BJ (cell line): ENCODE measurements at regions of chr7 and their contacts with region 1.

Region 1: GRCh38 chr7:78020136-78020873 is 221.7 kb downstream of the PHTF2 start:
- DNase-seq: peak; percentile 41
- H3K4me3 ChIP-seq: peak overlapping the region; percentile 54
- H3K27me3 ChIP-seq: no peaks in the 10 kb centered on the region
- CTCF ChIP-seq: peak; percentile 59

Region 2: DNA sequence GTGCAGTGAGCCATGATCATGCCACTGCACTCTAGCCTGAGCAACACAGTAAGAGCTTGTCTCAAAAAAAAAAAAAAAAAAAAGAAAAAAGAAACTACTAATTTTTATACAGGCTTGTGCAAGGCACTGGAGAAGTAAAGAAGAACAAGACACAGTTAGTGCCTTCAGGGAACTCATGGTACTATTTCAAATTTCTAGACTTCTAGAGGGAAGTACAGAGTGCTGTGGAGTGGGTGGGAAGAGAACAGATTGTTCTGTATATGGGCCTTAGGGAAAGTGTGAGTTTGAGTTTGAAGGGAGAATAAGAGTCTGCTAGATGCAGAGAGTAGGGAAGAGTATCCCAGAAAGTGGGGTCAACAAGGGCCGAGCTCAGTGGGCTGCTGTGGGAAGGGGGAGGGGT is 13.1 kb after region 1 on chr7:
- CTCF ChIA-PET with region 1: interaction called, 20 read pairs
- POLR2A ChIA-PET with region 1: no interaction called
- DNase-seq: no peak
- H3K4me3 ChIP-seq: no peak overlapping the region
- H3K27me3 ChIP-seq: no peaks in the 10 kb centered on the region
- CTCF ChIP-seq: no peak

Region 3: DNA sequence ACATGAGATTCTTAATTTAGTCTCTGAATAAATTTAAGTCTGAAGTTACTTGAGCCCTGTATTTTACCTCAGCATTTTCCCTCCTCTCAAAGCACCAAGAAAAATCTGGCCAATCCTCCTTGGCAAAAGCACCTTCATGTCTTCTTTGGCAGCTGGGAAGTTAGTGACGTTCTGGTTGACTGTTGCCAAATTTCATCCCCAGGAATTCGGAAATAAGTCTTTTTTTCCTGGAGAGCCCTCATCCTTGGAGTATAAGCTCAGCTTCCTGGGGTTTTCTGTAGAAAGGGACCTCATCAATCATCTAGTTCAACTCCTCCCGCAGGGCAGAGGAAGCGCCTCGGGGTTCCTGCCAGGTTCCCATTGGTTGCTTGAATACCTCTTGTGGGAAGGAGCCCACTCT is 155.9 kb after region 1 on chr7:
- CTCF ChIA-PET with region 1: no interaction called
- POLR2A ChIA-PET with region 1: no interaction called
- DNase-seq: no peak
- H3K4me3 ChIP-seq: no peak overlapping the region
- H3K27me3 ChIP-seq: no peaks in the 10 kb centered on the region
- CTCF ChIP-seq: no peak